Common myeloid progenitor, CD34-positive (primary cell): ENCODE measurements at regions of chr22 and their contacts with region 1.

Region 1: DNA sequence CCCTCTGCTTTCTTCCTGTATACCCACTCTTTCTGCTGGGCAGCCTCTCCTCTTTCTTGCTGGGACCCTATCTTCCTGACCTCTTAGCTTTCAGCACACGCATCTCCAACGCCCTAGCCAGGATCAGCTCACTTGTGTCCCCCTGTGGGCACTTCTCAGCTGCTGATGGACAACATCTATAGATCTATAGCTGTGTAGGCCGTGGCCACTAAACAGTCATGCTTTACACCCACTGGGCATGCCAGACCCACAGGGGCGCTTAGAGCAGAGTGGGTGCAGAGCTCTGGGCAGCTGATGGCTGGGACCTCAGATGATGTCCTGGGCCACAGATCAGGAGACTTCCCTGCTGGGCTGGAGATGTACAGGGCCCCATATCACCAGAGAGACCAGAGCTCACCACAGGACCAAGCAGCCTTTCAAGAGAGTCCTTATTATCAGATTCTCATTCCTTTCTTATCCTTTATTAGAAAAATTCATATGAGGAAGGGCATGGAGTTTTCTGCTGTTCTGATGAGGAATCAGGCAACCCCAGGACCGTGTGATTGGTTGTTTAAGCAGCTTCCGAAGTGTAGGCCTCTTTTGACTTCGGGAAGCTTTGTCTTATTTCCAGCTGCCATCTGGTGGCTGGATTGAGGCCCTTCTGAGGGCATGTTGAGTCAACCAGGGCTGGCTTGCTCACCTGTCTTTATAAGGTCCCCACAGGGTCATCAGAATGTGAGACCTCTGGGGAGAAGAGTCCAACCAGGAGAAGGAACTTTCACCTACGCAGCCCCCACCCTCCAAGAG is 60.5 kb downstream of the OSBP2 start:
- DNase-seq: peak; percentile 72 to 88 (median 83)
- H3K4me3 ChIP-seq: no peak overlapping the region
- H3K27ac ChIP-seq: no peak overlapping the region
- H3K4me1 ChIP-seq: no peaks in the 10 kb centered on the region
- H3K27me3 ChIP-seq: no peaks in the 10 kb centered on the region

Region 2: DNA sequence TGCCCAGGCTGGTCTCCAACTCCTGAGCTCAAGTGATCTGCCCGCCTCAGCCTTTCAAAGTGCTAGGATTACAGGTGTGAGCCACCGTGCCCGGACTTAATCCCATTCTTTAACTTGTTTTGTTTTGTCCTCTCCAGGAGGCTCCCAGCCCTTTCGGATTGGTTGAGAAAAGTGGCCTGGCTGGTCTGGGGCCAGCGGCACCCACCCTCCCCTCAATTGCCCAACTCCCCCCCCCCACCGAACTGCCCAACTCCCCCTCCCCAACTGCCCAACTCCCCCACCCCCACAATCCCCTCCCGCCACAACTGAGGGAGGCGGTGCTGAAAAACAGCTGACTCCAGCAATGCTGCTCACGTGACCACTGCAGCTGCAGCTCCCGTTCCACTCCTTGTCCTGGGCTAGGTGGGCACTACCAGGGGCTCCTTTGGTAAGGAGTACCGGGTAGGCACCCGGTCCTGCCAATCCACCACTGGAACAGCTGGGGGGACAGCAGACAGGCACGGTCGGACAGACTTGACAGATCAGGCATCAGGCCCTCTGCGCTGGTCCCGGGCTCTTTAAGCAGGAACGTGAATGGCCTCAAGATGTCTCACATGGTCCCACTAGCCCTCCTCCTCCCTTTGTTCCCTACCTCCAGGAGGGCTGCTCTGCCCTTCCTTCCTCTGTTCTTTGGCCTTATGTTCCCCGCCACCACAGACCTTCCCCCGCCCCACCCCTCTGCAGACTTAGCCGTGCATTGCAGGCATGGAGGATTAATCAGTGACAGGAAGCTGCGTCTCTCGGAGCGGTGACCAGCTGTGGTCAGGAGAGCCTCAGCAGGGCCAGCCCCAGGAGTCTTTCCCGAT is 148.5 kb before region 1 on chr22 and contains the start of gene TCN2:
- CTCF ChIA-PET with region 1: interaction called, 13 read pairs
- POLR2A ChIA-PET with region 1: no interaction called
- DNase-seq: peak in 2 of 3 donors; percentile 63 to 71
- H3K4me3 ChIP-seq: peak within 1 kb of the TSS; percentile 11 to 81 (median 65)
- H3K27ac ChIP-seq: peak within 1 kb of the TSS in 1 of 2 experiments; percentile 46
- H3K4me1 ChIP-seq: peaks cover 7 to 54% (median 45%) of the 10 kb centered on the region in 4 experiments
- H3K27me3 ChIP-seq: no peaks in the 10 kb centered on the region

Region 3: DNA sequence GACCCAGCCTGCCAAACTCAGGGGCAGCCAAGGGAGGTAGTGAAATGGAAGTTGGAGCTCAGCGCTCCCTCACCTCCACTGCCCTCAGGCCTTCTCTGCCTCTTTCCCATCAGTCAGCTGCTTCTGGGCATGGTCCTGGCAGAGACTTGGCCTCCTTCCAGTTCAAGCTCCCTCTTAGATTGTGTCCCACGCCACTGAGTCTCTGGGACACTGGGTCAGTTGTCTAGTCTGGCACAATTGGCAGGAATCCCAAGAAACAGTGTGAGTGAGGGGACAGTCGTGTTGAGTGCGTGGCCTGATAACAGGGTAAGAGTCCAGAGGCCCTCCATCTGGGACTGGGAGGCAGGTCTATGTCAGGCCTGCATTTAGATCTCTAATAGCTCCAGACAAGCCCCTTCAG is 126.7 kb before region 1 on chr22:
- CTCF ChIA-PET with region 1: interaction called, 160 read pairs
- POLR2A ChIA-PET with region 1: no interaction called
- DNase-seq: no peak
- H3K4me3 ChIP-seq: no peak overlapping the region
- H3K27ac ChIP-seq: no peak overlapping the region
- H3K4me1 ChIP-seq: no peaks in the 10 kb centered on the region
- H3K27me3 ChIP-seq: no peaks in the 10 kb centered on the region

Region 4: GRCh38 chr22:30634471-30635233 is 120.5 kb before region 1 on chr22:
- CTCF ChIA-PET with region 1: interaction called, 160 read pairs
- POLR2A ChIA-PET with region 1: interaction called, 10 read pairs
- DNase-seq: peak; percentile 84 to 89 (median 89)
- H3K4me3 ChIP-seq: peak overlapping the region in 5 of 7 experiments; percentile 30 to 78 (median 73)
- H3K27ac ChIP-seq: no peak overlapping the region
- H3K4me1 ChIP-seq: peaks cover 0 to 24% (median 23%) of the 10 kb centered on the region in 4 experiments
- H3K27me3 ChIP-seq: no peaks in the 10 kb centered on the region

Region 5: DNA sequence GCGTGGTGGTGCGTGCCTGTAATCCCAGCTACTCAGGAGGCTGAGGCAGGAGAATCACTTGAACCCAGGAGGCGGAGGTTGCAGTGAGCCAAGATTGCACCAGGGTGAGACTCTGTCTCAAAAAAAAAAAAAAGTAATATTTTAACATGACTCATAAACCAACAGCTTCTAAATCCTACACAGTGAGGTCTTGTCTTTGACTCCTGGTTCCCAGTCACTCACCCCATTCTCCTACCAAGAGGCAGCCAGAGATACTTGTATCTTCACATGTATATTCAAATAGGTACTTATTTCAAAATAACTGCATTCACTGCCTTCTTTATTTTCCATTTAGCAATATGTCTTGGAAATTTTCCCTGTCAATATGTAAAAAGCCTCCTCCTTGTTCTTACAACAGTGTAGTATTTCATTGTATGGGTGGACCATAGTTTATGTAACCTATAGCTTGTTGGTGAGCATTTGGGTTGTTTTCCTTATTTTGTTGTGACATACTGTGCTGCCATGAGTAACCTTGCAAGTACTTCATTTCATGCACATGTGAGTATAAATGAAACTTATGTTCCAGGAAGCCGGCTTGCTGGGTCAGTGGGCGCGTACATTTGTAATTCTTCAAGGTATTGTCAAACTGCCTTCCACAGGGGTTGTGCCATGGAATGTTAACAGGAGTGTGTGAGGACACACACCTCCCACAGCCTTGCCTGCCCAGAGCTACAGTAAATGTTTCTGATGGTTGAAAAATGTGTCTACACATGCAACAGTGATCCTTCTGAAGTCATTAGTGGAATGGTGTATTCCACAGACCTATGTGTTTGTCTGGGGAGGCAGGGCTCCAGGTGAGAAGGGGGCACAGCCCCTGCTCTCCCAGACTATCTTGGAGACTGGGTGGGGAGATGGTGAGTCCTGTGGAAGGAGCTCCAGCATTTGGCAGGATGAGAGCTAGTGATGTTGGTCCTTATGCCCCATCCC is 12.6 kb before region 1 on chr22:
- CTCF ChIA-PET with region 1: interaction called, 49 read pairs
- POLR2A ChIA-PET with region 1: interaction called, 3 read pairs
- DNase-seq: no peak
- H3K4me3 ChIP-seq: no peak overlapping the region
- H3K27ac ChIP-seq: no peak overlapping the region
- H3K4me1 ChIP-seq: peaks cover 3 to 17% (median 13%) of the 10 kb centered on the region in 4 experiments
- H3K27me3 ChIP-seq: no peaks in the 10 kb centered on the region